ENCODE measurements at regions of chr12 and their contacts with region 1.

Region 1: DNA sequence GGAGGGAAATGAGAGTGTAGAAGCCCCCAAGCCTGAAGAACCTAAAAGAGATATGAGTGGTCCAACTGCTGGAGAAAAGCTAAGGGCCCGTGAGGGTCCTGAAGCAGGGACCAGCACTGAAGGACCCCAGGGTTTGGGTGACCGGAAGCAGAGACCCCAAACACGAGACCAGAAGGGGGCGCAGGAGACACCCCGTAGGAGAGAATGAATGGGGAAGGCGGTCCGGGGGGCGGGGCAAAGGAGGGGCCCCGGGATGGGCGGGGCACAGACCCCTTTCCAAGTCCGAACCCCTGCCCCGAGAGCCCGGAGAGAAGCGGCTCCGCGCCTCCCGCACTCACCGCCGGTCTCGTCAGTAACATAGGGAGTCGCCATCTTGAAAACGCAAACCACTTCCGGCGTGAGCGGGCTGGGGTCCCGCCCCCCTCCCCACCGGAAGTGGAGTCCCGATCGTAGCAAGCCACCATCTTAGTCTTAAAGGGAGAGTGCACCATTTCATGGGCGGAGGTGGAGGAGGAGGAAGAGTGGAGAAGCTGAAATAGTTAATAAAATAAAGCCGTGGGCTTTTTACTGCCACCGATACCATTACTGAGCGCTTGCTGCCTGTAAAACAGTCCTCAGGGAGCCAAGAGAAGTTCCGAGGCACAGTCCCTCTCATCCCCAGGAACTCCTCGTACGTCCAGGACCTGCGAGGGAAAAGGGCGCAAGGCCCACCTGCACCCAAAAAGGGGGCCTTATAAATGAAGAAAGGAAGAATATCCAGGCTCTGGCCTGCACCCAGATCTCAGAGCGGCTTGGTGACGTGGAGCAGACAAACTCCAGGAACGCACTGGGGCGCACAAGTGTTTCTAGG is 731 bp downstream of the PYM1 start:
- DNase-seq: peak; percentile 72 to 95 (median 86)
- ATAC-seq: peak; percentile 36 to 53 (median 42)
- H3K4me3 ChIP-seq: peak overlapping the region; percentile 86 to 100
- H3K4me3 Mint-ChIP-seq: peak overlapping the region; percentile 96 to 100 (median 97)
- H3K27ac ChIP-seq: peak overlapping the region; percentile 79
- H3K27ac Mint-ChIP-seq: peak overlapping the region; percentile 96 to 99
- H3K4me1 ChIP-seq: peaks cover 18 to 32% of the 10 kb centered on the region in 2 experiments
- H3K4me1 Mint-ChIP-seq: peaks cover 56 to 76% (median 61%) of the 10 kb centered on the region in 3 donors
- H3K27me3 ChIP-seq: no peaks in the 10 kb centered on the region
- H3K27me3 Mint-ChIP-seq: no peaks in the 10 kb centered on the region

Region 2: GRCh38 chr12:55817346-55818139 is 109.4 kb before region 1 on chr12 and contains the starts of genes ORMDL2 and SARNP:
- CTCF ChIA-PET with region 1: interaction called, 3 to 13 read pairs
- POLR2A ChIA-PET with region 1: no interaction called
- DNase-seq: peak; percentile 77 to 100 (median 97)
- ATAC-seq: peak; percentile 91 to 96 (median 94)
- H3K4me3 ChIP-seq: peak within 1 kb of the TSS; percentile 83 to 97
- H3K4me3 Mint-ChIP-seq: no peak within 1 kb of the TSS
- H3K27ac ChIP-seq: peak within 1 kb of the TSS; percentile 65
- H3K27ac Mint-ChIP-seq: no peak within 1 kb of the TSS
- H3K4me1 ChIP-seq: peaks cover 24 to 26% of the 10 kb centered on the region in 2 experiments
- H3K4me1 Mint-ChIP-seq: peaks cover 41 to 51% (median 50%) of the 10 kb centered on the region in 3 donors
- H3K27me3 ChIP-seq: no peaks in the 10 kb centered on the region
- H3K27me3 Mint-ChIP-seq: no peaks in the 10 kb centered on the region
- total RNA-seq, gene ORMDL2: 19.0 to 46.8 (median 41.6) TPM
- total RNA-seq, gene SARNP: 36.9 to 50.3 (median 46.8) TPM

Region 3: GRCh38 chr12:55829967-55830600 is 96.9 kb before region 1 on chr12:
- CTCF ChIA-PET with region 1: interaction called, 4 to 15 read pairs
- POLR2A ChIA-PET with region 1: interaction called, 6 to 9 read pairs
- DNase-seq: peak in 28 of 35 experiments; percentile 10 to 52 (median 28)
- ATAC-seq: peak; percentile 10 to 19 (median 12)
- H3K4me3 ChIP-seq: peak overlapping the region; percentile 72 to 86
- H3K4me3 Mint-ChIP-seq: peak overlapping the region; percentile 94 to 97 (median 94)
- H3K27ac ChIP-seq: peak overlapping the region; percentile 50
- H3K27ac Mint-ChIP-seq: peak overlapping the region; percentile 88 to 90
- H3K4me1 ChIP-seq: peaks cover 26 to 62% of the 10 kb centered on the region in 2 experiments
- H3K4me1 Mint-ChIP-seq: peaks cover 53 to 65% (median 65%) of the 10 kb centered on the region in 3 donors
- H3K27me3 ChIP-seq: no peaks in the 10 kb centered on the region
- H3K27me3 Mint-ChIP-seq: no peaks in the 10 kb centered on the region

Region 4: GRCh38 chr12:55940065-55940732 is 13.2 kb after region 1 on chr12:
- CTCF ChIA-PET with region 1: interaction called, 5 to 14 read pairs
- POLR2A ChIA-PET with region 1: interaction called in 1 of 2 experiments, 5 read pairs
- DNase-seq: peak; percentile 62 to 92 (median 78)
- ATAC-seq: peak; percentile 81 to 91 (median 84)
- H3K4me3 ChIP-seq: no peak overlapping the region
- H3K4me3 Mint-ChIP-seq: peak overlapping the region; percentile 2 to 63 (median 44)
- H3K27ac ChIP-seq: peak overlapping the region; percentile 48
- H3K27ac Mint-ChIP-seq: peak overlapping the region; percentile 96 to 99
- H3K4me1 ChIP-seq: peaks cover 48 to 64% of the 10 kb centered on the region in 2 experiments
- H3K4me1 Mint-ChIP-seq: peaks cover 82 to 91% (median 89%) of the 10 kb centered on the region in 3 donors
- H3K27me3 ChIP-seq: no peaks in the 10 kb centered on the region
- H3K27me3 Mint-ChIP-seq: no peaks in the 10 kb centered on the region

Region 5: DNA sequence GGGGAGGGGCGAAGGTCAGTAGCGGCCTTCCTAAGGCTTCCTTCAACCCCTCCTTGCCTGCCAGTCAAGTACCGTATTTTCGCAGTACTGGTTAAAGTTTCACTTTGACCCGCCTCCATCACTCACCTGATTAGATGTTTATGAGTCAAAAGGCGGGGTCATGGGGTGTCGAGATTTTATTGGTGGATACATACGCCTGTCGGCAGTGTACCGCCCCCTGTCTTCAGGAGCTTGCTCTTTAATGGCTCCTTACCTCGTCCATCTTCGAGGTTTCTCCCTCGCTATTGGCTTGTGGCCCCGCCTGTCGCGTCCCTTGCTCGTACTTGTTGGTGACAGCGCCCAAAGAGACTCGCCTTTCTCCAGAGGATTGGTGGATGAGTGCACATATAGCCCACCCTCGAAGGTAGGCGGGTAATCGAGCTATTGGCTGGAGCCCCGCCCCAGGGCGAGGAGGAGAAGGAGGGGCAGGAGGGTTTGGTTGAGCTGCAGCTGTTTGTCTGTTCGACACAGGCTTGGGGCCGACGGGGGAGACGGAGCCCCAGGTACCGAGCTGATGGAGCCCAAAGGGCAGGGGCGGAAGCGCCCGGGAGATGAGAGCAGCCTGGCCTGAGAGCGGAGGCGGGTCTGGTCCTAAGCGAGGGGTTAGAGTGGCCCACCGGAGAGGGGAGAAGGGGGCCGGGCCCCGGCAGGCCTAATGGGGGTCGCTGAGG is 46.8 kb after region 1 on chr12 and contains the start of gene RAB5B:
- CTCF ChIA-PET with region 1: interaction called in 1 of 2 experiments, 15 read pairs
- POLR2A ChIA-PET with region 1: interaction called in 1 of 2 experiments, 5 read pairs
- DNase-seq: peak; percentile 92 to 100 (median 99)
- ATAC-seq: peak; percentile 91 to 93 (median 92)
- H3K4me3 ChIP-seq: peak within 1 kb of the TSS; percentile 69 to 89
- H3K4me3 Mint-ChIP-seq: no peak within 1 kb of the TSS
- H3K27ac ChIP-seq: peak within 1 kb of the TSS; percentile 70
- H3K27ac Mint-ChIP-seq: no peak within 1 kb of the TSS
- H3K4me1 ChIP-seq: peaks cover 18 to 21% of the 10 kb centered on the region in 2 experiments
- H3K4me1 Mint-ChIP-seq: peaks cover 22 to 27% (median 24%) of the 10 kb centered on the region in 3 donors
- H3K27me3 ChIP-seq: no peaks in the 10 kb centered on the region
- H3K27me3 Mint-ChIP-seq: no peaks in the 10 kb centered on the region
- total RNA-seq, gene RAB5B: 58.6 to 99.8 (median 85.7) TPM

Measured in T-cell (primary cell).